Posterior vena cava (tissue), 2 donors: ENCODE measurements at regions of chr10 and their contacts with region 1.

Region 1: DNA sequence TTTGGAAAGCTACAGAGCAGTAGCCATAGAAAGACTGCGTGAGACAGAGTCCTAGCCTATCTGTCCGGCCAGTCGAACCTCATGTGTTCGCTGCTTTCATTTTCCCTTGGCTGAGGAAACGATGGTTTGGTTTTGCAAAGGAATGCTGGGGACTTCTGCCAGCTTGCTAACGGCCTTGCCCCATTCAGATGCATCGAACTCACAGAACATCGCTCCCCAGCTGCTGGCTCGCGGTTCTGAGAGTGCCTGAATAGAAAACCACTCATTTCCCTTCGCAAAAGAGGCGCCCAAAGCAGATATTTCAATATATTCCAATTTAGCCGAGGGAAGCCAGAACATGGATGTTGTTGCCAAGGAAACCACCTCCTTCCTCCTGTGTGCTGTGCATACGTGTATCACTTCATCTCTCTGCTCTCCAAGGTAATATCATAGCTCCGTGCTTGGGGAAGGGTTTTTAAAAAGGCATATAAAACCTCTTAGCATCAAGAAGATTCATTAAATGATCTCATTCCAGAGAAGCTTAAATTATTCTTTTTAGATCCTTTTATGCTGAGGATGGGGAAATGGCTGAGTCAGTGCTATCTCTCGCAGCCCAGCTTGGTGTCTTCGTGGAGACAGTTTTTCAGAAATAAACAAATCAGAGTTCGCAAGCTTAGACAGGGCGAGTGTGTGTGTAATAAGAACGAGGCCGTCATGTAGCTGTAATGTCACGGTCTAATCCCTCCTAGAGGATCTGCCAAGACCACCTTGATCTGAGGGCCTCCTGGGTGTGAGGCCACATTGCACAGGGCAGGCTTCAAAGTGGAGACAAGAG is 215.2 kb downstream of the RPS24 start:
- DNase-seq: no peak

Region 2: GRCh38 chr10:77436257-77436975 is 812.4 kb before region 1 on chr10:
- intact Hi-C with region 1: loop called in 1 of 2 experiments (anchors 5 kb)
- DNase-seq: no peak